ENCODE measurements at regions of chr10 and their contacts with region 1.

Region 1: DNA sequence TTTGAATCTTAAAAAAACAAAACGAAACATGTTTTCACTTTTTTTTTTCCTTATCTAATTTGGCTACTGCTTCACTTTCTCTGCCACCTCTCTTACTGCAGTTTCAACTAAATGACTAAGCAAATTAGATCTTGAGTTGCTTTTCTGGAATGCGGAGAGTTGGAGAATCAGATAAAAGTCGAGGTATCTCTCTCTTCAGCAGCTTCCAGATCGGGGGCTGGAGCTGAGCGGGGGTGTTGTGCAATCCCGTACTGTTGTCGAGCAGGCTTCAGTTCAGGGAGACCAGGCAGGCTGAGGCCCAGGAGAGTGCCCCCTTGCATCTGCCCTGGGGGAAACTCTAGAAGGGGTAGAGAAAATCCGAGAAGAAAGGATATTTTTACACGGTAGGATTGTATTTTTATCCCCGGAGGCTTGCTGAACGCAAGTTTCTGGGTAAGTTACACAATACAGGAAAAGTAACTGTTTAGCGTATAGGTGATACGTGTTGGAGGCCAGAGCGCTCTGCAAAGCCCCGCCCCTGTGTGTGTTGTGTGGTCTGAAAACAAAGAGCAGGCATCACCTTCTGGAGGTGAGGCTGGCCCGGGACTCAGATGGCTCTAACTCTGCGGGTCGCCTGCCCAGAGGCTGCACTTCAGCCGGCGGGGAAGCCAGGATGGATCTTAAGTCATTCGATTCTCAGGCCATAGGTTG is 116.6 kb downstream of the KLF6 start:
- DNase-seq: peak; percentile 34 to 85 (median 77)
- ATAC-seq: peak; percentile 91
- H3K4me3 ChIP-seq: peak overlapping the region; percentile 63
- H3K4me3 Mint-ChIP-seq: peak overlapping the region; percentile 82 to 98 (median 88)
- H3K27ac ChIP-seq: peak overlapping the region; percentile 65
- H3K27ac Mint-ChIP-seq: peak overlapping the region; percentile 36 to 96 (median 93)
- H3K4me1 ChIP-seq: peaks cover 33% of the 10 kb centered on the region in 2 donors
- H3K4me1 Mint-ChIP-seq: peaks cover 27 to 51% (median 40%) of the 10 kb centered on the region in 7 donors
- H3K27me3 ChIP-seq: no peaks in the 10 kb centered on the region
- H3K27me3 Mint-ChIP-seq: no peaks in the 10 kb centered on the region

Region 2: DNA sequence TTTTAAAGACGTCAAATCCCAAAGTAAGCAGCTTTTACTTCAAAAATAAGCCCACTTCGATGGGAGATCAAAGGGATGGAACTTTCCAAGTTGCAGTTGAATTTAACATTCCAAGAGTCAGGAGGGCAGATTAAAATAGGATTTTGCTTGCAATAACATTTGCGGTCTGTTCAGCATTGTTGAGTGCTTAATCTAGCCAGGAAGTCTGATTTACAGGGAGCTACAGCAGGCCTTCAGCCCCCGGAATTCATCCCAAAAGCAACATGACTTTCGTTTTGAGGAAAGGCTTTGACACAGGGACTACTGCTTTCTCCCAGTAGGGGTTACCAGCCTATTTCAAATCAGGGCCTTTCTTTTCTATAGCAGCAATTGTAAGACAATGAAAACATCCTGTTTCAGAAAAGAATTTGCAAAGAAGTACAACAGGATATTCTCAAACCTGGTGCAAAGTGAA is 216.2 kb before region 1 on chr10:
- CTCF ChIA-PET with region 1: no interaction called
- POLR2A ChIA-PET with region 1: no interaction called
- intact Hi-C with region 1: loop called in 1 of 2 experiments (anchors 2 kb)
- DNase-seq: peak in 6 of 9 donors; percentile 18 to 56 (median 24)
- ATAC-seq: no peak
- H3K4me3 ChIP-seq: no peak overlapping the region
- H3K4me3 Mint-ChIP-seq: peak overlapping the region in 1 of 10 donors; percentile 57
- H3K27ac ChIP-seq: peak overlapping the region; percentile 51
- H3K27ac Mint-ChIP-seq: peak overlapping the region in 8 of 9 donors; percentile 16 to 88 (median 78)
- H3K4me1 ChIP-seq: peaks cover 0 to 38% of the 10 kb centered on the region in 2 donors
- H3K4me1 Mint-ChIP-seq: peaks cover 7 to 48% (median 36%) of the 10 kb centered on the region in 7 donors
- H3K27me3 ChIP-seq: peaks cover 0 to 6% of the 10 kb centered on the region in 2 donors
- H3K27me3 Mint-ChIP-seq: peaks cover 0 to 32% (median 0%) of the 10 kb centered on the region in 5 donors

Region 3: DNA sequence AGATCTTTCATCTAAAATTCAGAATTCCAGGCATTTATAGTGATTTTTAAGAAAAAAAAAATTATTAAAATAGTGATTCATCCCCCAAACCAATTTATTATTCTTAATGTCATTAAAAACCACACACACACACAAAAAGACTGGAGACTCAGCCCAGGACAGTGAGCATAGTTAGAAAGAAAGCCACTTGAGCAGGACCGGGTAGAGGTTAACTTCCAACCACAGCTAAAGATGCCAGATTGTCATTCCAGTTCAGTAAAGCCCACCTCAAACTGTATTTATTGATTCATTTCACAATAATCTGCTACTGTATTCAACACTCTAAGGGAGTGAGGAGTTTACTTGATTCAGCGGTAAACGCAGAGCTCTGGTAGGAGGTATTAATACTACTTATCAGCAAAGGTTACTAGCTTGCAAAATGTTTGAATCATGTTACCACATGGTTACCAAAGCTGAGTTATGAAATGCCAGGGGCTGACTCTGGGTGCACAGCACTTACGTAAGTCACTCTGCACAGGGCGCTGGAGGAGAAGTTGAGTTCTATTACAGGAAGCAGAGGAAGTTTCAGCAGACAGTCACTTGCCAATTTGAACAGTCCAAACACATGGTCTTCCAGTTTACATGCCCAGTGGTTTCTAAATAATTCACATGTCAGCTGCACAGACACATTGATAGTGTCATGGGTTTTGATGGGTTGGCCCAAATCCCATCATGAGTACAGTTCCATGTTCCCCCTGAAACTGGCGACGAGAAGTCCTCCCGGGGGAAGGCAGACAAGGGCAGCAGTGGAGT is 52.0 kb after region 1 on chr10:
- CTCF ChIA-PET with region 1: no interaction called
- POLR2A ChIA-PET with region 1: no interaction called
- intact Hi-C with region 1: no loop called
- DNase-seq: no peak
- ATAC-seq: peak; percentile 89
- H3K4me3 ChIP-seq: no peak overlapping the region
- H3K4me3 Mint-ChIP-seq: no peak overlapping the region
- H3K27ac ChIP-seq: no peak overlapping the region
- H3K27ac Mint-ChIP-seq: no peak overlapping the region
- H3K4me1 ChIP-seq: no peaks in the 10 kb centered on the region
- H3K4me1 Mint-ChIP-seq: peaks cover 0 to 7% (median 0%) of the 10 kb centered on the region in 7 donors
- H3K27me3 ChIP-seq: no peaks in the 10 kb centered on the region
- H3K27me3 Mint-ChIP-seq: peaks cover 0 to 39% (median 0%) of the 10 kb centered on the region in 5 donors

Region 4: DNA sequence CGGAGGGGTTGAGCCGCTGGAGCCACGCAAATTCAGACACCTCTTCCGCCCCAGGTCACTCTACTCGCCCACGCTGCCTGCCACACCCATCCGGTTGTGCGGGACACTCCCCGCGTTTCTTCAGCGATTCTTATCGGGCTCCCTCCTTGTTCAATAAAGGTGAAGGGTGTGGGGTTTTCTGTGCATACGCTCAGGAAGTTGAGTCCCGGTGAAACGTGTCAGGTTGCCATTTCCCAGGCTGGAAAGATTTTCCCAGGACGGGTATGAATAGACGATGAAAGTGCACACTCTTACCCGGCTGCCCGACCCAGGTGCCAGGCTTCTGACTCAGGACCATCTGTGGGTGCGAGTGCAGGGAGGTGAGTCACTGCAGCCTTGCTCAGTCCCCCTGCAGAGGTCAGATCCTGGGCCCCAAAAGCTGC is 94.6 kb after region 1 on chr10:
- CTCF ChIA-PET with region 1: no interaction called
- POLR2A ChIA-PET with region 1: interaction called, 4 read pairs
- intact Hi-C with region 1: loop called in 1 of 2 experiments (anchors 1 kb)
- DNase-seq: no peak
- ATAC-seq: no peak
- H3K4me3 ChIP-seq: no peak overlapping the region
- H3K4me3 Mint-ChIP-seq: peak overlapping the region in 1 of 10 donors; percentile 42
- H3K27ac ChIP-seq: no peak overlapping the region
- H3K27ac Mint-ChIP-seq: peak overlapping the region in 1 of 9 donors; percentile 53
- H3K4me1 ChIP-seq: peaks cover 20 to 67% of the 10 kb centered on the region in 2 donors
- H3K4me1 Mint-ChIP-seq: peaks cover 19 to 86% (median 40%) of the 10 kb centered on the region in 7 donors
- H3K27me3 ChIP-seq: no peaks in the 10 kb centered on the region
- H3K27me3 Mint-ChIP-seq: no peaks in the 10 kb centered on the region

Measured in naive thymus-derived CD4-positive, alpha-beta T cell (primary cell).